Activated B cell treated with CpG ODN at 0.5 μM for 24 hours (primary cell): ENCODE measurements at regions of chr18 and their contacts with region 1.

Region 1: DNA sequence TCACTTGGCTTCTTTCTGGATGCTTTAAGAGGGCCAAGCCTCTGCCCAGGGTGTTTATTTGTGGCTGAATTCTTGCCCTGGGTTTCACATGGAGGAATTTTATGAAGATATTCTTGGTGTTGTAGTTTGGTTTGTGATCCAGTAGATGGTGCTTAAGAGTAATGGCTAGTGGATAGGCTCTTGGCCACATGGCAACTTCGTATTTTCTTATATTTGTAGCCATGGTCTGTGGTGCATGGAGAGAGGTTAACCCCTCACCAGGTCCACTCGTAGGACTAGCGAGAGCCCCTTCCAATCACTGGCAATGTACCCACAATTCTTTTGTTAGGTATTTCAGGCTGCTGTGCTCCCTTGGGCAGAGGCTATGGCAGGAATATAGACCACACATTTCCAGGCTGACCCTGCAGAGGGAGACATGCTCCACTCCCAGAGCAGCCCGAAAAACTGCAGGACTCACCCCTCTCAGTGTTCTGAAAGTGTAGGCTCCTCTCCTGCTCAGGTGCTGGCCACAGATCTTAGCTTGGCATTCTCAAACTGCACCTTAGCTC is 582.1 kb upstream of the SETBP1 start:
- DNase-seq: no peak
- ATAC-seq: peak; percentile 40
- H3K4me3 Mint-ChIP-seq: no peak overlapping the region
- H3K27ac Mint-ChIP-seq: no peak overlapping the region
- H3K4me1 Mint-ChIP-seq: no peaks in the 10 kb centered on the region
- H3K27me3 Mint-ChIP-seq: peaks cover 14% of the 10 kb centered on the region
- CTCF ChIP-seq: no peak

Region 2: GRCh38 chr18:43620936-43621335 is 477.7 kb before region 1 on chr18:
- CTCF ChIA-PET with region 1: no interaction called
- POLR2A ChIA-PET with region 1: no interaction called
- intact Hi-C with region 1: loop called (anchors 10 kb)
- DNase-seq: no peak
- ATAC-seq: no peak
- H3K4me3 Mint-ChIP-seq: no peak overlapping the region
- H3K27ac Mint-ChIP-seq: no peak overlapping the region
- H3K4me1 Mint-ChIP-seq: no peaks in the 10 kb centered on the region
- H3K27me3 Mint-ChIP-seq: peaks cover 5% of the 10 kb centered on the region
- CTCF ChIP-seq: no peak

Region 3: DNA sequence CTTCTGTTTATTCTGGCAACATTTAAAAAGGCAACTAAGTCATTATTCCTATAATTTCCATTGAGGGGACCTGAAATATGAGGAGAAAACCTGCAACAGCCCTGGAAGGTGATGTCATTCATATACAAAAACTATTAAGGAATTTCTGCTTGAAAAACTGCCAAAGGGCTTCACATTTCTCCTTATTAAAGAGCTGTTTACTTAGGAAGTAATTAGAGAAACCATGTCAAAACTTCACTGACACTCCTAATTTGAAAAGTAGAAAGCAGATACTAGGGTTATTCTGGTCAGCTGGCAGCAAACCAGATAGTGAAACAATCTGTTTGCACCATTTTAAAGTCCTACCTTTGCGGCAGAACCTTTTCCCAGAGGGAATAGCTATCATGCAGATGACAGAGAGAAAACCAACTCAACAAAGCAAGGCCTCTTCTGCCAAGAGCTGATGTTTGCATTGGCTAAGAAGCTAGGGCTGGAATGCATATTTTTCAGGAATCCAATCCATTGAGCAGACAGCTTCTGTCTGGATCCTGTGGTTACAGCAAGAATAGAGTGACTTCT is 229.1 kb before region 1 on chr18:
- CTCF ChIA-PET with region 1: no interaction called
- POLR2A ChIA-PET with region 1: no interaction called
- intact Hi-C with region 1: no loop called
- DNase-seq: no peak
- ATAC-seq: no peak
- H3K4me3 Mint-ChIP-seq: no peak overlapping the region
- H3K27ac Mint-ChIP-seq: no peak overlapping the region
- H3K4me1 Mint-ChIP-seq: no peaks in the 10 kb centered on the region
- H3K27me3 Mint-ChIP-seq: no peaks in the 10 kb centered on the region
- CTCF ChIP-seq: no peak